Right ventricle myocardium inferior (tissue), 1 donor: ENCODE measurements at regions of chr6 and their contacts with region 1.

Region 1: GRCh38 chr6:27753668-27754407 is 158.4 kb downstream of the OR2B2 start:
- DNase-seq: peak; percentile 85
- ATAC-seq: peak; percentile 53

Region 2: DNA sequence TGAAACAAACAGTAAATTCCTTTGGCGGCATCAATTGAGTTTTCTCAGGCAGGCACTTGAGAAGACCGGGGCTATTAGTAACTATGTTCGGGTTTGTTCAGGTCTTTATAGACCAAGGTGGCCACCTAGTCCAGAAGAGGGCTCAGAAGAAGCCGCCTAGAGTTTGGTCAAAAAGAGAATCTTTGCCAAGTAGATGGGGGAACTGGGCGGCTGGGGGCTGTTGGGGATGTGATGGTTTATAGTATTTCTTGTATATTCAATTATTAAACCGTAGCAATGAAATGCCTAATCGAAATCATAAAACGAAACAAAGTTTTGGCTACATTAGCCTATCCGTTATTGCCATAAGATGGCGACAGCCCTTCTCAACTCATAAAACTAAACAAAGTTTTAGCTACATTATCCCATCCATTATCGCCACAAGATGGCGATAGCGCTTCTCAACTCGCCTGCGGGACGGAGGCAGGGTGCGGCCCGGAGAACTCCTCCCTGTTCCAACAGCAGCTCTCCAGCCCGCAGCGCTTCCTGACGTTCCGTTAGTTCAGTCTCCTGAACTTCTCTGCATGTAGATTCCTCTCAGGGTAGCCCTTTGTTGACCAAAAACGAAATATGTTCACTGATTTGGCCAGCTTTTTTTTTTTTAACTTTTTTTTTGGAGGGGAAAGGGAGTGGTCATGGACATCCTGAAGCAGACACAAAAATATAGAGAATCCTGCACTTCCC is 626.9 kb before region 1 on chr6:
- intact Hi-C with region 1: loop called (anchors 5 kb)
- DNase-seq: peak; percentile 93
- ATAC-seq: peak; percentile 93

Region 3: GRCh38 chr6:27177485-27178406 is 576.1 kb before region 1 on chr6:
- intact Hi-C with region 1: loop called (anchors 5 kb)
- DNase-seq: peak; percentile 87
- ATAC-seq: peak; percentile 81

Region 4: DNA sequence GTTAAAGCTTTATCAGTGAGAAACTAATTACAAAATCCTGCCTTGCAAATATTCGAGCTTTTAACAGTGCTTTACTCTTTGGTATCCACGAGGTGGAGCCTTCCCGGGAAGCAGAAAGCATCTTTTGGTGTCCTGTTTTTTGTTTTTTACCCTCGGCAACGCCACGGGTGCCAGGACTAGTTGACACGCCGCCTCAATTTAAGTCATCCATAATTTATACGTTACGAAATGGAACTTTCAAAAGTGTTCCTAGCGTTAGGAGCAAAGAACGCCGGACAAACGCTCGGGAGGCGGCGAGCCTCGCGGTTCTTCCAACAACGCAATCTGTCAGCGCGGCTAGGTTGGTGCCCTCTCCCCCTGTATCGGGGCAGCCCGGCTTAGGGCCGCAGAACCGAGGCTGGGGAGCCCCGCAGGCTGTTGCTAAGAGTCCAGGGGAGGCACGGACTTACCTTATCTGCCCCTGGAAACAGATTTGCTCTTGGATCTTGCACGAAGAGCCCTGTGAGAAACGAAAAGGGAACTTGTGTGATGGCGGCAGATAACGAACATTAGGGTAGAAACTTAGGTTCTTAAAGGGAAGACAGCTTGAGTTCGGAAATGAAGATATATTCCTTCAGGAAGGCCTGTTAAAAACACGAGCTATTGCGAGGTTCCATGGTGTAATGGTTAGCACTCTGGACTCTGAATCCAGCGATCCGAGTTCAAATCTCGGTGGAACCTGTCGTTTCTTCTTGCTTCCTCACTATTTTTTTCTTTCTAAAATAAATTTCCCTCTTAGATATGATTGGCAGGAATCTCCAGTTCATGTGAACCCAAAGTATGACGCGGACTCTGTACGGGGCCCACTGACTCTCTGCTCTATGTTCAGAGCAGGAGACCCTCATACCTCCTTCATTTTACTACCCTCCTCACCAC is 234.7 kb before region 1 on chr6:
- intact Hi-C with region 1: loop called (anchors 2 kb)
- DNase-seq: peak; percentile 79
- ATAC-seq: peak; percentile 88

Region 5: GRCh38 chr6:27651371-27651732 is 102.5 kb before region 1 on chr6:
- intact Hi-C with region 1: no loop called
- DNase-seq: no peak
- ATAC-seq: no peak